Activated CD8-positive, alpha-beta T cell treated with anti-CD3 and anti-CD28 coated beads, Interleukin-2, amount 10 ng/mL, durations not matched to agents 7 days and 5 days (primary cell): ENCODE measurements at regions of chr7 and their contacts with region 1.

Region 1: GRCh38 chr7:23570592-23571200 is 26.5 kb upstream of the CCDC126 start:
- DNase-seq: peak; percentile 73
- ATAC-seq: peak; percentile 83
- H3K4me3 Mint-ChIP-seq: no peak overlapping the region
- H3K27ac Mint-ChIP-seq: no peak overlapping the region
- H3K4me1 Mint-ChIP-seq: no peaks in the 10 kb centered on the region
- H3K27me3 Mint-ChIP-seq: peaks cover 14% of the 10 kb centered on the region

Region 2: DNA sequence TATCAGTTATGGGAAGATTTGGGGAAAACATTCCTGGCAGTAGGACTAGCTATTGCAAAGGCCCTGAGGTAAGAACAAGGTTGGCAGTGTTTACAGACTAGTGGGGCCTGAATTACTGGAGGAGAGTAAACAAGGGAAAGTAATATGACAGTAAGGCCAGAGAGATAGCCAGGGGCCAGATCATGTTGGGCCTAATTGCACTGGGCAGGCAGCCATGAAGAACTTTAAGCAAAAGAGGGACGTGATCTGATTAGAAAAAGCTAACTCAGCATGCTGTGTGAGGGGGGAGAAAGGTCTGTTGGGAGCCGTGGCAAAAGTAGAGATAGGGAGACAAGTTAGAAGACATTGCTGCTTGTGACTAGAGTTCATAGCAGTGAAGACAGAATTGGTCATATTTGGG is 379.7 kb before region 1 on chr7:
- CTCF ChIA-PET with region 1: no interaction called
- POLR2A ChIA-PET with region 1: no interaction called
- DNase-seq: no peak
- ATAC-seq: no peak
- H3K4me3 Mint-ChIP-seq: no peak overlapping the region
- H3K27ac Mint-ChIP-seq: peak overlapping the region; percentile 1
- H3K4me1 Mint-ChIP-seq: peaks cover 8% of the 10 kb centered on the region
- H3K27me3 Mint-ChIP-seq: no peaks in the 10 kb centered on the region

Region 3: GRCh38 chr7:23712368-23713284 is 141.9 kb after region 1 on chr7:
- CTCF ChIA-PET with region 1: interaction called, 30 read pairs
- POLR2A ChIA-PET with region 1: no interaction called
- DNase-seq: no peak
- ATAC-seq: no peak
- H3K4me3 Mint-ChIP-seq: no peak overlapping the region
- H3K27ac Mint-ChIP-seq: no peak overlapping the region
- H3K4me1 Mint-ChIP-seq: no peaks in the 10 kb centered on the region
- H3K27me3 Mint-ChIP-seq: no peaks in the 10 kb centered on the region